PC-9 (cell line): ENCODE measurements at regions of chr6 and their contacts with region 1.

Region 1: DNA sequence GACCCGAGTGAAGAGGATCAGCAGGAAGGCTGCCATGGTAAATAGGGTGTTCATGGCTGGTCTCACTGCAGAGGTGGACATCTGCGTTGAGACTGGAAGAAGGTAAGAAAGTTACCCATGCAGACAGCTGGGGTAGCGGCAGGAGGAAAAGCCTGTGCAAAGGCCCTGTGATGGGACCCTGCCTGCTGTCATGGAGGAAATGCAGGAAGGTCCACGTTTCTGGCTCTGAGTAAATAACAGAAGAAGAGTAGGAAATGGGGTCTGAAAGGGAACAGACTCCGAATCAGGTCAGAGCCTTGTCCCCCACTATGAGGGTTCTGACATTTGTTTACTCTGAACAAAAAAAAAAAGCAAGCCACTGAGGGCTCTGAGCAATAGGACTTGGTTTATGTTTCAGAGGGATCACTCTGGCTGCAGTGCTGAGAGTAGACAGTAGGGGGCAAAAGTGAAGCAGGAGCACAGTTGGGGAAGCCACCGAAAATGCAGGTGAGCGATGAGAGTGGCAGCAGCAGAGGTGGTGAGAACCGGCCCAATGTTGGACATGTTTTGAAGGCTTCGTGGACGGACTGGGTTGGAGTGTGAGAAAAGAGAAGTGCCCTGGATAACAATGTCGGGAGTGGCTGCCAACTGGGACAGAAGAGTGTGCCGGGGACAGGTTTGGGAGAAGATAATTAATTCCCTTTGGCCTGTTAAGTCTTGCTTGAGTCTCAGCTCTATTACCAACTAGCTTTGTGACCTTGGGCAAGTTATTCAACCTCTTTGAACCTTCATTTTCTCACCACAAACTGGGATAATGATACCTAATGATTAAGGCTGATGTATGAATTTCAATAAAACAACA is 57.9 kb upstream of the MAP7 start:
- DNase-seq: peak; percentile 61 to 62
- H3K4me3 ChIP-seq: no peak overlapping the region
- H3K27ac ChIP-seq: peak overlapping the region; percentile 84
- H3K4me1 ChIP-seq: peaks cover 53% of the 10 kb centered on the region
- H3K27me3 ChIP-seq: no peaks in the 10 kb centered on the region
- CTCF ChIP-seq: peak; percentile 87

Region 2: GRCh38 chr6:136582711-136583471 is 25.3 kb before region 1 on chr6:
- CTCF ChIA-PET with region 1: no interaction called
- POLR2A ChIA-PET with region 1: no interaction called
- intact Hi-C with region 1: loop called (anchors 1 kb)
- DNase-seq: peak in 1 of 2 experiments; percentile 96
- H3K4me3 ChIP-seq: no peak overlapping the region
- H3K27ac ChIP-seq: peak overlapping the region; percentile 66
- H3K4me1 ChIP-seq: peaks cover 25% of the 10 kb centered on the region
- H3K27me3 ChIP-seq: no peaks in the 10 kb centered on the region
- CTCF ChIP-seq: peak; percentile 92

Region 3: DNA sequence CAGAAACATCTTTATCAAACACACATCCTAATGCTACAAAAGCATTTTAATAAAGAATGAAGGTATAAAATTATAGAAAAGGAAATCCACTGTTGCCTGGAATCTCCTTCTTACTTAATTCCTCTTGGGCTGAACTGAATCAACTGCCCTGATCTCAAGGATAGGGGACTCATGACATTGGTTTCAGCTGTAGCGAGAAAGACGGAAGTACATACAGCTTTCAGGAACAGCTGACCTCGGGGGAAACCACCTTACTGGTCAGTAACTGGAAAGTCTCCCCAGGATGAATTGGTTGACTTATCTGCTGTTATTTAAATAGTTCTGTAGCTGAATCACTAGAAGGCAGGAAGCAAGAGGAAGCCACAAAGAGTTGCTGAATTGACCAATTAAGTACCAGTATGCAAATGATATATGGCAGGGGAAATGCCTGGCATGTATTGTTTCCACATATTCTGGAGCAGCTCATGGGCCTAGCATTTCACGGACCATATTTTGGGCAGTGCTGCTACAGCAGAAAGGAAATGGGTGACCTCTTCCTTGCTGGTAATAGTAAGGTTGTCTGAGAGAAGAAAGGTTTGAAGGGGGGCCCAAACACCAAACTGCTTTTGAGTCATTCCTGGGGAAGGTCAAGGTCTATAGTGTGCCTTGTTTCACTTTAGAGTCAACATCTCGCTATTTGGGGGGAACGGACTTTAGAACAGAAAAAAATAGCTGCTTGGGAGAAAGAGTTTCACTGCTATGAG is 14.2 kb before region 1 on chr6:
- CTCF ChIA-PET with region 1: no interaction called
- POLR2A ChIA-PET with region 1: no interaction called
- intact Hi-C with region 1: loop called (anchors 2 kb)
- DNase-seq: peak; percentile 50 to 96
- H3K4me3 ChIP-seq: no peak overlapping the region
- H3K27ac ChIP-seq: peak overlapping the region; percentile 46
- H3K4me1 ChIP-seq: peaks cover 12% of the 10 kb centered on the region
- H3K27me3 ChIP-seq: no peaks in the 10 kb centered on the region
- CTCF ChIP-seq: no peak

Region 4: GRCh38 chr6:136643850-136644596 is 35.9 kb after region 1 on chr6:
- CTCF ChIA-PET with region 1: interaction called, 9 read pairs
- POLR2A ChIA-PET with region 1: no interaction called
- intact Hi-C with region 1: loop called (anchors 1 kb)
- DNase-seq: peak; percentile 85 to 90
- H3K4me3 ChIP-seq: no peak overlapping the region
- H3K27ac ChIP-seq: no peak overlapping the region
- H3K4me1 ChIP-seq: peaks cover 9% of the 10 kb centered on the region
- H3K27me3 ChIP-seq: no peaks in the 10 kb centered on the region
- CTCF ChIP-seq: peak; percentile 99

Region 5: DNA sequence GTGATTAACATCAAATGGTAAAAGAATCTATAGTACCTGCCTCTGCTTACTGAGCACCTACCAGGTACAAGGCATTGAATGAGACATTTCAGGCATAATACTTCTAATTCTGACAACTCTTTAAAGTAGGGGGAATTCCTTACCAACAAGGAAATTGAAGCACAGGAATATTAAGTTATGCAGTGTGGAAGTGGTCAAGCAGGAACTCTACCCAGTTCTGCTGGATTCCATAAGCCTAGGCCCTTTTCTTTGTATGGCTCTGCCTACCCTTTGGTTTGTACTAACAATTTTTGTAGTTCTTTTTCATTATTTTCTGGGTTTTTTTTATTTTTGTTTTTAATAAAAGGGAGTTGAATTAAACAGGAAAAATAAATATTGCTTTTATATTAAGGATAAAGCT is 69.7 kb after region 1 on chr6:
- CTCF ChIA-PET with region 1: no interaction called
- POLR2A ChIA-PET with region 1: no interaction called
- intact Hi-C with region 1: loop called (anchors 1 kb)
- DNase-seq: peak; percentile 54 to 96
- H3K4me3 ChIP-seq: peak overlapping the region; percentile 37; the same call in 1 of the 2 replicates
- H3K27ac ChIP-seq: peak overlapping the region; percentile 65
- H3K4me1 ChIP-seq: peaks cover 54% of the 10 kb centered on the region
- H3K27me3 ChIP-seq: no peaks in the 10 kb centered on the region
- CTCF ChIP-seq: no peak

Region 6: GRCh38 chr6:138161338-138162110 is 1553.4 kb after region 1 on chr6 and contains the start of gene ARFGEF3:
- CTCF ChIA-PET with region 1: no interaction called
- POLR2A ChIA-PET with region 1: interaction called, 23 read pairs
- intact Hi-C with region 1: no loop called
- DNase-seq: peak; percentile 63 to 66
- H3K4me3 ChIP-seq: peak within 1 kb of the TSS; percentile 62
- H3K27ac ChIP-seq: peak within 1 kb of the TSS; percentile 52
- H3K4me1 ChIP-seq: peaks cover 24% of the 10 kb centered on the region
- H3K27me3 ChIP-seq: no peaks in the 10 kb centered on the region
- CTCF ChIP-seq: no peak
- total RNA-seq, gene ARFGEF3: 9.9 and 10.0 TPM in 2 replicates